WTC11 (cell line): ENCODE measurements at regions of chr7 and their contacts with region 1.

Region 1: DNA sequence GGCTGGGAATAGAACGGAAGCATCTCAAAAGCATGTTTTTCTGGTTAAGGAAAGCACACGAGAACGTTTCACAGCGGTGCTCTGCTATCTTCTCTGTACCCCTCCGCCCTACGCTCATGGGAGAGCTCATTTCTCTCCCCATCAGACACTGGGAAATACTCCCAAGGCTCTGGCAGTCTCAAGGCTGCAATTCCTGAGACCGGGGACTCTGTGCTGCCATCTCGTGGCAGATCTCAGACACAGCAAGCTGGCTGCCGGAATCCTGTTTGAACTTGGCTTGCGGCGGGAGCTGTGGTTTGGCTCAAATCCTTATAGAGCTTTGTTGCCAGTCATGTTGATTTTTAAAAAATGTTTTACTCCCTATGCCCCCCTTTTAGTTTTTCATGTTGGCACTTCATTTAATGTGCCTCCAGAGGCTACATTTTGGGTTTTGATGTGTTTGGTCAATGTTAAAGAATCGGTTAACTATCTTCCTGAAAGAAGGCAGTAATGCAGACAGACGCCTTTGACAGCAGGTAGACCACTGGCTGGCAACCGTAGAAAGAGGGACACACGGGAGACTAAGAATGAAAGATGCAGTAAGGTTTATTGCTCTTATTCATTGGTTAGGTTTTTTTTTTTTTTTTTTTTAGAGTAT is 27.6 kb downstream of the BMPER start:
- DNase-seq: peak; percentile 87
- ATAC-seq: peak; percentile 94
- H3K4me3 Mint-ChIP-seq: no peak overlapping the region
- H3K27ac Mint-ChIP-seq: no peak overlapping the region
- H3K4me1 Mint-ChIP-seq: peaks cover 24% of the 10 kb centered on the region
- H3K27me3 Mint-ChIP-seq: no peaks in the 10 kb centered on the region
- CTCF ChIP-seq: peak; percentile 81

Region 2: GRCh38 chr7:33757562-33758165 is 175.3 kb before region 1 on chr7:
- CTCF ChIA-PET with region 1: interaction called, 19 read pairs
- POLR2A ChIA-PET with region 1: no interaction called
- DNase-seq: no peak
- ATAC-seq: no peak
- H3K4me3 Mint-ChIP-seq: no peak overlapping the region
- H3K27ac Mint-ChIP-seq: no peak overlapping the region
- H3K4me1 Mint-ChIP-seq: peaks cover 23% of the 10 kb centered on the region
- H3K27me3 Mint-ChIP-seq: no peaks in the 10 kb centered on the region
- CTCF ChIP-seq: peak; percentile 63

Region 3: GRCh38 chr7:33886149-33886623 is 46.8 kb before region 1 on chr7:
- CTCF ChIA-PET with region 1: interaction called, 38 read pairs
- POLR2A ChIA-PET with region 1: no interaction called
- DNase-seq: peak; percentile 78
- ATAC-seq: peak; percentile 89
- H3K4me3 Mint-ChIP-seq: no peak overlapping the region
- H3K27ac Mint-ChIP-seq: no peak overlapping the region
- H3K4me1 Mint-ChIP-seq: peaks cover 23% of the 10 kb centered on the region
- H3K27me3 Mint-ChIP-seq: no peaks in the 10 kb centered on the region
- CTCF ChIP-seq: peak; percentile 33; the same call in 1 of the 2 replicates

Region 4: DNA sequence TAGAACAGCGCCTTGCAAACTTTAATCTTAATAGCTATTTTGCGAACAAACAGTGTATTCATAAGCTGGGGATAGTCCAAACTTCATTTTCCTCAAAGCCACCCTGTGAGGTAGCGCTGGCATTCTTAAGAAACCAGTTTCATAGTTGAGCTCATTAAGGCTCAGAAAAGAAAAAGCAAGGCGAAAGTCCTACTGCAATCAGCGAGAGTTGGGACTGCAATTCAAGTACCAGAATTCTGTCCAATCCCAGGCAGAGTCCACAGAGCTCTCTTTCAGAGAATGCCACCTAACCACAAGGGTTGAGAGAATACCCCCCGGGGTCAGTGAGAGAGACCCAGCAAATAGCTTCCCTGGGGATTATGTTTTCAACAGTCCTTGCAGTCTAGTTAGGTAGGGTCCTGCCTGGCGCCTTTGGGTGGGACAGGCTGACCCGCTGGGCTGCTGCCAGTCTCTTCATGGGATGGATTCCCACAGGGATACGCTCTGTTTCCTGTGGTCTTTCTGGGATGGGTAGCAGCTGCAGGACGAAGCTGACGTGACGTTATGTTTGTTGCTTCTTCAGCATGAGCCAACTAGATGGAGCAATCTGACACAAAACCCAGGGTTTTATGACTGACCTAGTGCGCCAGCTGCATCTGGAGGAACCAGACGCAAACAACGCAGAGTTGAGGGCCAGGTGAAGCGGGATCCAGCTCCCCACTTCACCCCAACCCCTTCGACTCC is 11.6 kb before region 1 on chr7:
- CTCF ChIA-PET with region 1: interaction called, 27 read pairs
- POLR2A ChIA-PET with region 1: no interaction called
- DNase-seq: no peak
- ATAC-seq: no peak
- H3K4me3 Mint-ChIP-seq: no peak overlapping the region
- H3K27ac Mint-ChIP-seq: no peak overlapping the region
- H3K4me1 Mint-ChIP-seq: peaks cover 16% of the 10 kb centered on the region
- H3K27me3 Mint-ChIP-seq: no peaks in the 10 kb centered on the region; the same call in 1 of the 2 replicates
- CTCF ChIP-seq: no peak

Region 5: GRCh38 chr7:33982425-33982786 is 49.5 kb after region 1 on chr7:
- CTCF ChIA-PET with region 1: interaction called, 38 read pairs
- POLR2A ChIA-PET with region 1: no interaction called
- DNase-seq: no peak
- ATAC-seq: peak; percentile 48
- H3K4me3 Mint-ChIP-seq: no peak overlapping the region
- H3K27ac Mint-ChIP-seq: no peak overlapping the region
- H3K4me1 Mint-ChIP-seq: peaks cover 13% of the 10 kb centered on the region
- H3K27me3 Mint-ChIP-seq: no peaks in the 10 kb centered on the region
- CTCF ChIP-seq: peak; percentile 42